Activated CD4-positive, alpha-beta memory T cell treated with anti-CD3 and anti-CD28 coated beads for 36 hours (primary cell): ENCODE measurements at regions of chr10 and their contacts with region 1.

Region 1: GRCh38 chr10:88880282-88881076 is 434 bp downstream of the STAMBPL1 start:
- DNase-seq: peak; percentile 86
- H3K4me3 Mint-ChIP-seq: peak overlapping the region; percentile 88
- H3K27ac Mint-ChIP-seq: peak overlapping the region; percentile 95
- H3K4me1 Mint-ChIP-seq: peaks cover 59% of the 10 kb centered on the region
- H3K27me3 Mint-ChIP-seq: no peaks in the 10 kb centered on the region

Region 2: DNA sequence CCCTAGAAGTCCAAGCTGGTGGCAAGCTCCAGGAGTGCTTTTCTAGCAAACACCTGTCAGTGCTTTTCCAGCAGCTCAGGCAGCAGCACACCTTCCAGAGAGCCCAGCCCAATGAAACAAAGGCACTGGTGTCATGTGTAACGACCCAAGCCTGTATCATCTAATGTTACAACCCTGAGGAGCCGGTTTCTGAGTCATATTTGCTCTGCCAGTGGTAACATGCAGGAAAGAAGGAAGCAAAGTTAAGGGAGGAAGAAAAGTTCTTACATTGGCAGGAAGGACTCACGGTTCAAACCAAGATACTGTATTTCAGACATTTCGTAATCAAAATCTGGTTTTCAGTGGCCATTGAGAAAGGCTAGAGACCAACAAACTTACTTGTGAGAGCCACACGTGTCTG is 28.8 kb before region 1 on chr10 and contains the start of gene ANKRD22:
- CTCF ChIA-PET with region 1: interaction called, 3 read pairs
- POLR2A ChIA-PET with region 1: no interaction called
- intact Hi-C with region 1: loop called (anchors 1 kb)
- DNase-seq: no peak
- H3K4me3 Mint-ChIP-seq: no peak within 1 kb of the TSS
- H3K27ac Mint-ChIP-seq: no peak within 1 kb of the TSS
- H3K4me1 Mint-ChIP-seq: peaks cover 20% of the 10 kb centered on the region
- H3K27me3 Mint-ChIP-seq: peaks cover 6% of the 10 kb centered on the region
- total RNA-seq, gene ANKRD22: 0.12 to 0.24 TPM

Region 3: DNA sequence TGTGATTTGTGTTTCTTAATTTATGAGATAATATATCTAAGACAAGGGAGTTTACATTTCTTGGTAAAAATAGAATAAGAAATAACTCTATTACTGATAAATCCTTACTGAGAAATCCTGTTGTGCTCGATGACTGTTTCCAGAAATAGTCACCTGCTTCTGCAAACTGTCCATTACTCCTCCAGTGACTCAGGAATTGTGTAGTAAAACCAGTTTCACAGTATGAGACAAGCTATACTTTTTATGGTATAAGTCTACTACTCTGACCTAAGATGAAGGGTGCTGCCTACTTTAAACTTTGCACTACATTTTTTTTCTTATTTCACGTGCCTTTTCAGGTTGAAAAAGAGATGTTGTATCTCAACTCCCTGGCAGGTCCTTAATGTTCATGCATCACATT is 22.0 kb before region 1 on chr10:
- CTCF ChIA-PET with region 1: interaction called, 4 read pairs
- POLR2A ChIA-PET with region 1: interaction called, 6 read pairs
- intact Hi-C with region 1: loop called (anchors 2 kb)
- DNase-seq: no peak
- H3K4me3 Mint-ChIP-seq: no peak overlapping the region
- H3K27ac Mint-ChIP-seq: no peak overlapping the region
- H3K4me1 Mint-ChIP-seq: peaks cover 21% of the 10 kb centered on the region
- H3K27me3 Mint-ChIP-seq: peaks cover 11% of the 10 kb centered on the region

Region 4: GRCh38 chr10:88870089-88870488 is 10.4 kb before region 1 on chr10:
- CTCF ChIA-PET with region 1: no interaction called
- POLR2A ChIA-PET with region 1: no interaction called
- intact Hi-C with region 1: no loop called
- DNase-seq: no peak
- H3K4me3 Mint-ChIP-seq: no peak overlapping the region
- H3K27ac Mint-ChIP-seq: no peak overlapping the region
- H3K4me1 Mint-ChIP-seq: no peaks in the 10 kb centered on the region
- H3K27me3 Mint-ChIP-seq: no peaks in the 10 kb centered on the region